WTC11 (cell line): ENCODE measurements at regions of chr2 and their contacts with region 1.

Region 1: DNA sequence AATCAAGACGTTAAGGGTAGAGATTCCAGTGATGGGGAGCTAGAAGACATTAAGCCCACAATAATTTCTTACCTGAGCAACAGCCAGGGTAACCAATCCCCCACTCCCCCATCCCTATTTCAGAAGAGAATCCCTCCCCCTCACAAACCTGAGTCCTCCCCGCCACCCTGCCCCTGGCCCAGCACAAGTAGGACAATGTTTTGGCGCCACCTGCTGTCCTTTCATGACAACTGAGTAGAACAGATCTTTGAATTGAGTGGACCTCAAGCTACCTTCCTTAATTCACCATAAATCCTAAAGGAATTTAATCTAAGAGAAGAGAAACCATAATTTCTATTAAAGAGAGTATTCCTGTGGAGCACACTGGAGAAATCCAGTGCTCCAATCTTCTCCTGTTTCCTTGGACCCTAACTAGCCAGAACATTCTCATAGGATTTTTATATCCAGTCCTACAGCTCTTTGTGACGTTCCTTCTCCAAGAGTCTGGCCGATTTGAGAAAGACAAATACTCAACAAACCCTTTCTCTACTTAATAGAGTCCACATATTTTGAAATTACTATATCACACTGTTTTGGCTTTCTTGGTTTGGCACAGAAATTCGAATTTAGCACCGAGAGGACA is 41.1 kb downstream of the NHEJ1 start:
- DNase-seq: peak; percentile 81
- ATAC-seq: peak; percentile 78
- H3K4me3 Mint-ChIP-seq: no peak overlapping the region
- H3K27ac Mint-ChIP-seq: no peak overlapping the region
- H3K4me1 Mint-ChIP-seq: peaks cover 21% of the 10 kb centered on the region
- H3K27me3 Mint-ChIP-seq: no peaks in the 10 kb centered on the region
- CTCF ChIP-seq: peak; percentile 59

Region 2: GRCh38 chr2:219002395-219003266 is 116.9 kb before region 1 on chr2:
- CTCF ChIA-PET with region 1: interaction called, 22 read pairs
- POLR2A ChIA-PET with region 1: no interaction called
- DNase-seq: peak; percentile 95
- ATAC-seq: peak; percentile 69
- H3K4me3 Mint-ChIP-seq: peak overlapping the region; percentile 83
- H3K27ac Mint-ChIP-seq: no peak overlapping the region
- H3K4me1 Mint-ChIP-seq: peaks cover 22% of the 10 kb centered on the region
- H3K27me3 Mint-ChIP-seq: peaks cover 100% of the 10 kb centered on the region
- CTCF ChIP-seq: peak; percentile 29; the same call in 1 of the 2 replicates

Region 3: GRCh38 chr2:219057709-219058540 is 61.6 kb before region 1 on chr2:
- CTCF ChIA-PET with region 1: interaction called, 198 read pairs
- POLR2A ChIA-PET with region 1: interaction called, 4 read pairs
- DNase-seq: peak; percentile 91
- ATAC-seq: peak; percentile 82
- H3K4me3 Mint-ChIP-seq: peak overlapping the region; percentile 58
- H3K27ac Mint-ChIP-seq: no peak overlapping the region
- H3K4me1 Mint-ChIP-seq: peaks cover 25% of the 10 kb centered on the region
- H3K27me3 Mint-ChIP-seq: peaks cover 96% of the 10 kb centered on the region
- CTCF ChIP-seq: peak; percentile 80

Region 4: GRCh38 chr2:219079417-219079816 is 40.1 kb before region 1 on chr2:
- CTCF ChIA-PET with region 1: interaction called, 80 read pairs
- POLR2A ChIA-PET with region 1: no interaction called
- DNase-seq: no peak
- ATAC-seq: no peak
- H3K4me3 Mint-ChIP-seq: no peak overlapping the region
- H3K27ac Mint-ChIP-seq: no peak overlapping the region
- H3K4me1 Mint-ChIP-seq: 0 out of 2 replicates have a peak, but pooled peaks cover 6% of the 10 kb centered on the region
- H3K27me3 Mint-ChIP-seq: no peaks in the 10 kb centered on the region
- CTCF ChIP-seq: no peak

Region 5: GRCh38 chr2:219104107-219105035 is 15.2 kb before region 1 on chr2:
- CTCF ChIA-PET with region 1: interaction called, 62 read pairs
- POLR2A ChIA-PET with region 1: no interaction called
- DNase-seq: peak; percentile 41
- ATAC-seq: peak; percentile 98
- H3K4me3 Mint-ChIP-seq: no peak overlapping the region
- H3K27ac Mint-ChIP-seq: 0 out of 2 replicates have a peak overlapping the region, but pooled peaks have one; percentile 41
- H3K4me1 Mint-ChIP-seq: peaks cover 3% of the 10 kb centered on the region
- H3K27me3 Mint-ChIP-seq: no peaks in the 10 kb centered on the region
- CTCF ChIP-seq: peak; percentile 75

Region 6: GRCh38 chr2:219331560-219332213 is 212.2 kb after region 1 on chr2:
- CTCF ChIA-PET with region 1: no interaction called
- POLR2A ChIA-PET with region 1: no interaction called
- DNase-seq: peak; percentile 69
- ATAC-seq: peak; percentile 78
- H3K4me3 Mint-ChIP-seq: peak overlapping the region; percentile 54
- H3K27ac Mint-ChIP-seq: no peak overlapping the region
- H3K4me1 Mint-ChIP-seq: peaks cover 11% of the 10 kb centered on the region
- H3K27me3 Mint-ChIP-seq: peaks cover 94% of the 10 kb centered on the region
- CTCF ChIP-seq: no peak

Region 7: DNA sequence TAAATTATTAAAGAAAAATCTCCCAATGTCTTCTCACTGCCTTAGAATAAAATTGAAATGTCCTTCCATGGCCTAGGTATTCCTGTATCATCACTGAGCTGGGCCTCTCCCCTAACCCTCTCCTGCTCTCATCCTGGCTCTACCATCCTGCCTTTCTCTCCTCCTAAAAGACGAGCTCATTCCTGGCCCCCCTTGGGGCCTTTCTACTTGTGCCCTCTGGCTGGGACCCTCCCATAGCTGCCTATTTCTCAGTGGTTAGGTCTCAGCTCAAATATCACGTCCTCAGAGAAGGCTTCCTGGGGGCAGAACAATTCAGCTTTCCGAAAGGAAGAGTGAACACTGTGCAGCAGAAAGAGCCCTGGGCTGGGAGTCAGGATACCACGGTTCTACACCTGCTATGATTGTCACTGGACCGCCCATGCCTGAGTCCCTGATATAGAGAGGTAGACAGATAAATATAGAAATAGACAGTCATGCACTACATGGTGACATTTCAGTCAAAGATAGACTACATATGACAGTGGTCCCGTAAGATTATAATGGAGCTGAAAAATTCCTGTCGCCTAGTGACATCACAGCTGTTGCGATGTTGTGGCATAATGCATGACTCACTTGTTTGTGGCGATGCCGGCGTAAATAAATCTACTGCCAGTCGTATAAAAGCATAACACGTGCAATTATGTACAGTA is 258.8 kb after region 1 on chr2:
- CTCF ChIA-PET with region 1: no interaction called
- POLR2A ChIA-PET with region 1: no interaction called
- DNase-seq: no peak
- ATAC-seq: no peak
- H3K4me3 Mint-ChIP-seq: no peak overlapping the region
- H3K27ac Mint-ChIP-seq: no peak overlapping the region
- H3K4me1 Mint-ChIP-seq: no peaks in the 10 kb centered on the region
- H3K27me3 Mint-ChIP-seq: no peaks in the 10 kb centered on the region
- CTCF ChIP-seq: no peak